ENCODE measurements at regions of chr16 and their contacts with region 1.

Region 1: GRCh38 chr16:71610936-71611871 is 14.8 kb upstream of the MARVELD3 start:
- DNase-seq: peak; percentile 39 to 77 (median 41)
- ATAC-seq: peak in 3 of 4 donors; percentile 81 to 84 (median 83)
- H3K4me3 ChIP-seq: no peak overlapping the region
- H3K27ac ChIP-seq: no peak overlapping the region
- H3K4me1 ChIP-seq: peaks cover 0 to 5% (median 0%) of the 10 kb centered on the region in 12 donors
- H3K27me3 ChIP-seq: peaks cover 0 to 37% (median 9%) of the 10 kb centered on the region in 9 donors
- CTCF ChIP-seq: peak; percentile 71 to 90 (median 78)
- POLR2A ChIP-seq: no peak

Region 2: GRCh38 chr16:71373073-71373472 is 238.1 kb before region 1 on chr16:
- intact Hi-C with region 1: no loop called
- DNase-seq: no peak
- ATAC-seq: no peak
- H3K4me3 ChIP-seq: no peak overlapping the region
- H3K27ac ChIP-seq: no peak overlapping the region
- H3K4me1 ChIP-seq: no peaks in the 10 kb centered on the region
- H3K27me3 ChIP-seq: peaks cover 0 to 44% (median 6%) of the 10 kb centered on the region in 9 donors
- CTCF ChIP-seq: no peak
- POLR2A ChIP-seq: no peak

Region 3: GRCh38 chr16:71412270-71413160 is 198.7 kb before region 1 on chr16:
- intact Hi-C with region 1: loop called in 7 of 10 experiments (anchors 2 to 5 kb)
- DNase-seq: peak in 4 of 5 donors; percentile 36 to 59 (median 57)
- ATAC-seq: peak in 3 of 4 donors; percentile 77 to 80 (median 79)
- H3K4me3 ChIP-seq: no peak overlapping the region
- H3K27ac ChIP-seq: no peak overlapping the region
- H3K4me1 ChIP-seq: peaks cover 0 to 9% (median 0%) of the 10 kb centered on the region in 12 donors
- H3K27me3 ChIP-seq: peaks cover 0 to 47% (median 12%) of the 10 kb centered on the region in 9 donors
- CTCF ChIP-seq: peak; percentile 73 to 97 (median 85)
- POLR2A ChIP-seq: no peak

Region 4: DNA sequence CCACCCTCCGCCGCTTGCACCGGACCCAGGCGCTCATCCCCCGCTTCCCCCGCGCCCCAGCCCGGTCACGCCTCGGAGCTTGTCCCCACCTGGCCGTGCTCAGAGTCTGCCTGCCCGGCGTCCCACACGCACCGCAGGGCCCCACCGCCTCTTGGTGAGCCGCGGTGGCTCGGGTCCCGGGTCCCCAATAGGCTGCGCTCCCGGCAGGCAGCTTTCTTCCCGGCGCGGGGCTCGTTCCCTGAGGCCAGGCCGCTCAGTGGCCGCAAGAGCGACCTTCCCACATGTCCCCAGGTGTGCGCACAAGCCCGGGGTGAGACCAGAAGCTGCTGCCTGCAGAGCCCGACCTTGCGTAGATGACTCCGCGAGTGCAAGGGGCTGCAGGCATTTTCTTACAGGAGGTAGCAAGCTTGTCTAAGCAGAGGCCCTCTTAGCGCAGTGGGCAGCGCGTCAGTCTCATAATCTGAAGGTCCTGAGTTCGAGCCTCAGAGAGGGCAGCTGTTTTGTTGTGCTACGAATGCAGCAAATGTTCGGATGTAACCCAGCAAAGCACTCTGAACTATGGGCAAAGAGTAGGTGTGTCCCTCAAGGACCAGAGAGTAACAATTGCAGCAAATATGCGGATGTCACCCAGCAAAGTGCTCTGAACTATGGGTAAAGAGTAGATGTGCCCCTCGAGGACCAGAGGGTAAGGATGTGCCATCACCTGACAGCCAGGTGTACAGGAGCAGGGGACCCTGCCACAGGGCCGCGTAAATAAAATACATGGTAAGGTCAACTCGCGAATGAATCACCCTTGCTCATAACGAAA is 184.9 kb before region 1 on chr16:
- intact Hi-C with region 1: loop called in 1 of 10 experiments (anchors 10 kb)
- DNase-seq: no peak
- ATAC-seq: peak in 1 of 4 donors; percentile 40
- H3K4me3 ChIP-seq: no peak overlapping the region
- H3K27ac ChIP-seq: no peak overlapping the region
- H3K4me1 ChIP-seq: peaks cover 0 to 8% (median 0%) of the 10 kb centered on the region in 12 donors
- H3K27me3 ChIP-seq: peaks cover 4 to 68% (median 20%) of the 10 kb centered on the region in 9 donors
- CTCF ChIP-seq: no peak
- POLR2A ChIP-seq: no peak

Region 5: DNA sequence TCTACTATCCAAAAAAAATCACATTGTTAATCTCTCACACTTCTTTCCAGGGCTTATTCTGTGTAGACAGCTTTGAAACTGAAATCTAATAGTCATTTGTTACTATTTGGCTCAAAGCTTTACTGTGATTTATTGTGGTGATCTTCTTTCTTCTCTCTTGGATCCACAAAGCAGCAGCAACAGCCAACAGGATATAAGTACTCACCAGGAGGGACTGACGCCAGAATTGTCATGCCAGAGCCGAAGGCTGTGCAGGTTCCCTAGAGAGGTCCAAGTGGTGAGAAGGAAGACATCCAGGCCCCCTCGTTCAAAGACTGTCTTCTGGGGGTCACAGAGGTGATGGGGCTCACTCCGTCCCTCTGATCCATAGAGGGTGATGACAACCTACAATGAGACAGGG is 355.7 kb after region 1 on chr16:
- intact Hi-C with region 1: no loop called
- DNase-seq: no peak
- ATAC-seq: no peak
- H3K4me3 ChIP-seq: no peak overlapping the region
- H3K27ac ChIP-seq: no peak overlapping the region
- H3K4me1 ChIP-seq: no peaks in the 10 kb centered on the region
- H3K27me3 ChIP-seq: no peaks in the 10 kb centered on the region
- CTCF ChIP-seq: no peak
- POLR2A ChIP-seq: no peak

Region 6: DNA sequence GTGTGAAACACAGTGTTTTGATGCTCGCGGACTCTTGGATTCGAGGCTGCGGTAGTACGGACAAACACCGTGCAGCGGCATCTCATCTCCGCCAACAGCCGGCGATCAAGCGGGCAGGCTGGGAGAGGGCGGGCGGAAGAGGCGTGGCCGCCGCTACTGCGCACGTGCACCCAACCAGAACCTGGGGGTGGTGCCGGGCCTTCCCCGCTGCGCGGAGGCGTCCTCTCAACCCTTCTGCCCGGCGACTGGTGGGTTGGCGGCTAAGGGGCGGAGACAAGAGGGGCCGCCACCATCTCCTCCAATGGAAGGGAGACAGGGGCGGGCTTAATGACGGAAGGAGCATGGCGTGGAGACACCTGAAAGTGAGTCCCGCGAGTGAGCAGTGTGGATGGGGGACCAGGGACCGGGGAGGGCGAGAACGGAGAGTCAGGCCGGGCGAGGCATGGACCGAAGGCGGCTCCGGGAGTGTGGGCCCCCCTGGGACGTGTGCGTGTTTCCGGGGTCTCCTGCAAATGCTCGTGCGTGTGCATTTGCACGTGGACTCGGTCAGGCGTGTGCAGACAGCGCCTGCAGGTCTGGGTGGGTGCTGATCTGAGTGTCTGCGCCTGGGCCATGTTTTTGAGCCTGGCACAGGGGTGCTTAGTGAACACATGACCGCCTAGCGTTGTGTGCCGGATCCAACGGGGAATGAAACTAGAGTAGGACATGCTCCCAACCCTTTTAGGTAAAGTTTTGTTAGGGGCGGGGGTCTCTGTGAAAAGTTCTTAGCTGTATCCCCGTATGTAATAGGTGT is 397.4 kb after region 1 on chr16 and contains the start of gene DHODH:
- intact Hi-C with region 1: no loop called
- DNase-seq: peak; percentile 98 to 99 (median 99)
- ATAC-seq: peak; percentile 100
- H3K4me3 ChIP-seq: peak within 1 kb of the TSS; percentile 69 to 96 (median 86)
- H3K27ac ChIP-seq: peak within 1 kb of the TSS in 9 of 12 donors; percentile 30 to 79 (median 62)
- H3K4me1 ChIP-seq: peaks cover 0 to 14% (median 10%) of the 10 kb centered on the region in 12 donors
- H3K27me3 ChIP-seq: no peaks in the 10 kb centered on the region
- CTCF ChIP-seq: peak in 3 of 12 donors; percentile 33 to 44 (median 33)
- POLR2A ChIP-seq: peak in 1 of 2 donors; percentile 64
- total RNA-seq, gene DHODH: 5.2 to 9.8 (median 7.5) TPM

Measured in heart left ventricle (tissue), 16 donors.